ENCODE measurements at regions of chr13 and their contacts with region 1.

Region 1: DNA sequence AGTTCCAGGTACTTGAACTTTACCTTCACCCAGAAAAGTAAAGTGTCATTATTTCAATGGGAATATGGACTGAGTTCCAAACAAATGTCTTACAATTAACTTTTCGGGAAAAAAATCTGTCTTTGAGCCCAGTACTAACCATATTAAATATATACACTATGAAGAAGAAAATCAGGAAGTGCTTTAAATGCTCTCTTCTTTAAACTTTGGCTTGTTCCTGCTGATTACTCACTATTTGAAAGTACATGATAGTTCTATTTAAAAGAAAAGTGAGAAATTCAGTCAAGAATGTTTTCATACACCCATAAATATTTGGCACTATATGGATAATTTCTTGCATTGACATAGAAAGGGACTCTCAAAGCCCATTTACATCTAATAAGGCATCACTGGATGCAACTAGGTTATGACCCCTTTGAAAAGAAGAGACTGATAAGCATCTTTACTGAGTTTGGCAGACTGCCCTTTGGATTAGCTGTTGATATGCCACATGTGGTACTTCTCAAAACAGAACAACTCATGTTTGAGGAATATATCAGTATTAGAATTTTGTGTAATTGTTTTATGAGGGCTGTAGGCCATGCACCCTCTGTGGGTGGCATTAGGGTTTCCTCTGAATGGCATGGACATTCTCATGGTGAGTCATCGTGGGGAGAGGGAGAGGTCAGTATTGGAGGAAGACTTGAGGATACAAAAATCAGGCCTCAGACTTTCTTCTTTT is 25.0 kb upstream of the VWA8 start:
- DNase-seq: no peak
- ATAC-seq: no peak
- H3K4me3 ChIP-seq: no peak overlapping the region
- H3K27ac ChIP-seq: no peak overlapping the region
- H3K4me1 ChIP-seq: no peaks in the 10 kb centered on the region
- H3K27me3 ChIP-seq: no peaks in the 10 kb centered on the region

Region 2: GRCh38 chr13:41942462-41943094 is 43.4 kb before region 1 on chr13:
- intact Hi-C with region 1: no loop called
- DNase-seq: no peak
- ATAC-seq: no peak
- H3K4me3 ChIP-seq: no peak overlapping the region
- H3K27ac ChIP-seq: no peak overlapping the region
- H3K4me1 ChIP-seq: no peaks in the 10 kb centered on the region
- H3K27me3 ChIP-seq: no peaks in the 10 kb centered on the region

Region 3: GRCh38 chr13:42022796-42023493 is 37.0 kb after region 1 on chr13:
- intact Hi-C with region 1: loop called in 1 of 2 experiments (anchors 5 kb)
- DNase-seq: no peak
- ATAC-seq: no peak
- H3K4me3 ChIP-seq: no peak overlapping the region
- H3K27ac ChIP-seq: no peak overlapping the region
- H3K4me1 ChIP-seq: no peaks in the 10 kb centered on the region
- H3K27me3 ChIP-seq: no peaks in the 10 kb centered on the region